B cell (primary cell): ENCODE measurements at regions of chr14 and their contacts with region 1.

Region 1: GRCh38 chr14:23588884-23589598 is 10.5 kb upstream of the JPH4 start:
- DNase-seq: peak; percentile 73
- ATAC-seq: peak; percentile 98
- H3K4me3 ChIP-seq: no peak overlapping the region
- H3K4me3 Mint-ChIP-seq: no peak overlapping the region
- H3K27ac ChIP-seq: no peak overlapping the region
- H3K27ac Mint-ChIP-seq: no peak overlapping the region
- H3K4me1 ChIP-seq: peaks cover 0 to 6% of the 10 kb centered on the region in 2 donors
- H3K4me1 Mint-ChIP-seq: peaks cover 3% of the 10 kb centered on the region
- H3K27me3 ChIP-seq: no peaks in the 10 kb centered on the region
- H3K27me3 Mint-ChIP-seq: peaks cover 27% of the 10 kb centered on the region
- CTCF ChIP-seq: peak; percentile 73

Region 2: DNA sequence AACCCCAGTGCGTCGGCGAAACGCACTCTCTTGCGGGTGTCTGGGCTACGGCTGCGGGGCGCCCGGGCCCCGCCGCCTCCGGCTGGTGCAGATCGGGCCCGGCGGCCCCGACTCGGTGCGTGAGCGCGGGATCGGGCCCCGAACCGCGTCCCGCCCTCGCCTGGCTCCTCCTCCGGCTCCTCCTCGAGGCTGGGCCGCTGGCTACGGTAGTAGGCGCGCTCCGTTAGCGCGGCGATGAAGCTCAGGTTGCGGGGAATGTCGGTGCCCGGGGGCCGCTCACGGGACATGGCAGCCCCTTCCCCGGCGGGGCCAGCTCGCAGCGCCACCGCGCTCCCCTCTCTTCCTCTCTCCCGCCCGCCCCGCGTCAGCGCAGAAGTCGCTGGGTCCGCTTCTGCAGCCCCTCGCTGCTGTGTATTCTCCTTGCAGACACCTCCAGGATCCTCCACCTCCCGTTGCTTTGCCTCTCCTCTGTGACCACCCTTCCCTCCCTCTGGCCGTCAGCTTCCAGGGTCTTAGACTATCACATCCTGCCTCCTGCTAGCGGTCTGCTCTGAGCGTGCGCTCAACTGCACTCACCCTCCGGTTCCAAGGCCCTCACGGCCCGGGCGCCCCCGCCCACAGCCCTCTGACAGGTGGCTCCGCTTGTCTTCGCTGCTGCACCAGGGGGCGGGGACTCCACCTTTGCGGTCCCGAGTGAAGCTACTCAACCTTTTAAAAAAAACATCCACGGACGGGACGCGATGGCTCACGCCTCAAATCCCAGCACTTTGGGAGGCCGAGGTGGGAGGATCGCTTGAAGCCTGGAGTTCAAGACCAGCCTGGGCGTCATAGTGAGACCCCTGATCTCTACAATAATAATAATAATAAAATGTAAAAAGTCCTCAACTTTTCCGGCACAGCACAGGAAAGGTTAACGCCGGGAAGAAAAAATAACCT is 286.5 kb before region 1 on chr14 and contains the start of gene PPP1R3E:
- CTCF ChIA-PET with region 1: no interaction called
- POLR2A ChIA-PET with region 1: no interaction called
- intact Hi-C with region 1: no loop called
- DNase-seq: peak; percentile 91
- ATAC-seq: peak; percentile 25
- H3K4me3 ChIP-seq: peak within 1 kb of the TSS; percentile 54 to 86 (median 81)
- H3K4me3 Mint-ChIP-seq: peak within 1 kb of the TSS; percentile 98
- H3K27ac ChIP-seq: peak within 1 kb of the TSS; percentile 95 to 96
- H3K27ac Mint-ChIP-seq: peak within 1 kb of the TSS; percentile 98
- H3K4me1 ChIP-seq: peaks cover 25 to 37% of the 10 kb centered on the region in 2 donors
- H3K4me1 Mint-ChIP-seq: peaks cover 45% of the 10 kb centered on the region
- H3K27me3 ChIP-seq: no peaks in the 10 kb centered on the region
- H3K27me3 Mint-ChIP-seq: no peaks in the 10 kb centered on the region
- CTCF ChIP-seq: no peak
- total RNA-seq, gene PPP1R3E: 74.8 and 76.7 TPM in 2 replicates

Region 3: DNA sequence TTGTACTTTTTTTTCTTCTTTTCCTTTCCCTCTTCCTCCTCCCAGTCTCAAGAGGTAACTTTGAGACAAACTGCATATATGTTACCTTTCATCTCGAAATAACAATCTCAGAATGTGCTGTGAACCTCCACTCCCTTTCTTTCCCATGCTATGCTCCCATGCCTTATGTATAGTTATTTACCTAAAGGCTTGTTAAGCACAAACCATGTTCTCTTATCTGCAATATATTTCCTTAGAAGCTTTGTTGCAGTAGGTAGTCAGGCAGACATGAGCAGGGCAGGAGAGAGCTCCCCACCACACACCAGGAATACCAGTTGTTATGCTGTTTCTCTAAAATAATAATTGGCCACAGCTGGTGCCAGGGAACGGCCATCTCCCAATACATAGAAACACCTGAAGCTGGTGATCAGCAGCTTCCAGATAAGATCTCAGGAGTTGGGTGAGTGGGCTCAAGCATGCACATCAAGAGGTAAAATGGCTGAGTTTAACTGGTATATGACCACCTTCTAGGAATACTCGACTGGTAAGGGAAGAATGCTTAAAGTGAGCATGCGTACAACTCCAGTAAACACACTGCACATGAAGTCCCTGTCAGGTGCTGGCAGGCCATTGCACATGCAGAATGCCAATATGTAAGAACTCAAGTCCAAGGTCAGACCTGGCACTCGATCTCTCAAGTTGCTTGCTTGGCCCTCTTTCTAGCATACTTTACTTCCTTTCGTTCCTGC is 32.3 kb after region 1 on chr14:
- CTCF ChIA-PET with region 1: no interaction called
- POLR2A ChIA-PET with region 1: no interaction called
- intact Hi-C with region 1: no loop called
- DNase-seq: no peak
- ATAC-seq: no peak
- H3K4me3 ChIP-seq: no peak overlapping the region
- H3K4me3 Mint-ChIP-seq: no peak overlapping the region
- H3K27ac ChIP-seq: no peak overlapping the region
- H3K27ac Mint-ChIP-seq: no peak overlapping the region
- H3K4me1 ChIP-seq: no peaks in the 10 kb centered on the region
- H3K4me1 Mint-ChIP-seq: no peaks in the 10 kb centered on the region
- H3K27me3 ChIP-seq: peaks cover 0 to 3% (median 0%) of the 10 kb centered on the region in 4 experiments
- H3K27me3 Mint-ChIP-seq: peaks cover 30% of the 10 kb centered on the region
- CTCF ChIP-seq: no peak

Region 4: DNA sequence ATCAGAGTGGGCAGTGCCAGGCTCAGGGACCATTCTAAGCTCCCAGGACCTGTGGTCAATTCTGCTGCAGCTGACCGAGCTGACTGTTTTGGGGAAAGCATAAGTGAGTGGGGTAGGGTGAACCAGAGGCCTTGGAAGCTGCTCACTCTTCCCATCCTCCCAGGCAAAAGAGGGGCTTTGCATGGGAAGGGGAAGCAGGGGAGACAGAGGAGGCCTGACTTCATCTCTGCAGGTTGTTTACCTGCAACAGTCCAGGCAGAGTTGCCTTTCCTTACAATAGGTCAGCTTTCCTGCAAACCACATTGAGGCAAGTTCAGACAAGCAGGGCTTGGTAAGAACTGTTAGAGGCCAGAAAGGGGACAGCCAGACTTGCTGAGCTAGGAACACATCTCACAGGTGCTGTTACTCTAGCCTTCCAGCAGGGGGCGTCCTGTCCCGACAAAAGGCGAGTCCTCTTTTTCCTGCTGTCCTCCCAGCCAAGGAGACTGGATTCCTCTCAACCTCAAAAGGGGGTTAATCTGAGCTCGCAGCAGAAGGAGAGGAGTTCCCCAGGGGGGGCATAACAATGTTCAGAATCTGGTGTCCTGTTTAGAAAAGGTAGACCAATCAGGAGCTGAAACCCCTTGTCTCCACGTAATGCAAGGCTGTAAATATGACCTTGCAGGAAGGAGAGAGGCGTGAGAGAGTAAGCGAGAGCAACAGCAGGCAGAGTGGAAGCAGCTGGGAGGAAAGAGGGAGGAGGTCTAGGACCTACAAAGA is 42.8 kb after region 1 on chr14:
- CTCF ChIA-PET with region 1: interaction called, 21 read pairs
- POLR2A ChIA-PET with region 1: no interaction called
- intact Hi-C with region 1: no loop called
- DNase-seq: peak; percentile 71
- ATAC-seq: peak; percentile 58
- H3K4me3 ChIP-seq: peak overlapping the region in 2 of 5 experiments; percentile 11 to 44
- H3K4me3 Mint-ChIP-seq: peak overlapping the region; percentile 4
- H3K27ac ChIP-seq: no peak overlapping the region
- H3K27ac Mint-ChIP-seq: no peak overlapping the region
- H3K4me1 ChIP-seq: peaks cover 3 to 7% of the 10 kb centered on the region in 2 donors
- H3K4me1 Mint-ChIP-seq: peaks cover 4% of the 10 kb centered on the region
- H3K27me3 ChIP-seq: peaks cover 0 to 12% (median 2%) of the 10 kb centered on the region in 4 experiments
- H3K27me3 Mint-ChIP-seq: peaks cover 20% of the 10 kb centered on the region
- CTCF ChIP-seq: peak; percentile 86

Region 5: GRCh38 chr14:23663127-23663526 is 74.1 kb after region 1 on chr14:
- CTCF ChIA-PET with region 1: no interaction called
- POLR2A ChIA-PET with region 1: no interaction called
- intact Hi-C with region 1: loop called (anchors 2 kb)
- DNase-seq: no peak
- ATAC-seq: no peak
- H3K4me3 ChIP-seq: no peak overlapping the region
- H3K4me3 Mint-ChIP-seq: no peak overlapping the region
- H3K27ac ChIP-seq: no peak overlapping the region
- H3K27ac Mint-ChIP-seq: no peak overlapping the region
- H3K4me1 ChIP-seq: no peaks in the 10 kb centered on the region
- H3K4me1 Mint-ChIP-seq: no peaks in the 10 kb centered on the region
- H3K27me3 ChIP-seq: peaks cover 0 to 3% (median 0%) of the 10 kb centered on the region in 4 experiments
- H3K27me3 Mint-ChIP-seq: peaks cover 23% of the 10 kb centered on the region
- CTCF ChIP-seq: no peak

Region 6: GRCh38 chr14:23929822-23930294 is 340.8 kb after region 1 on chr14:
- CTCF ChIA-PET with region 1: interaction called, 24 read pairs
- POLR2A ChIA-PET with region 1: no interaction called
- intact Hi-C with region 1: no loop called
- DNase-seq: peak; percentile 77
- ATAC-seq: peak; percentile 84
- H3K4me3 ChIP-seq: no peak overlapping the region
- H3K4me3 Mint-ChIP-seq: no peak overlapping the region
- H3K27ac ChIP-seq: no peak overlapping the region
- H3K27ac Mint-ChIP-seq: no peak overlapping the region
- H3K4me1 ChIP-seq: no peaks in the 10 kb centered on the region
- H3K4me1 Mint-ChIP-seq: no peaks in the 10 kb centered on the region
- H3K27me3 ChIP-seq: no peaks in the 10 kb centered on the region
- H3K27me3 Mint-ChIP-seq: peaks cover 5% of the 10 kb centered on the region
- CTCF ChIP-seq: peak; percentile 96

Region 7: DNA sequence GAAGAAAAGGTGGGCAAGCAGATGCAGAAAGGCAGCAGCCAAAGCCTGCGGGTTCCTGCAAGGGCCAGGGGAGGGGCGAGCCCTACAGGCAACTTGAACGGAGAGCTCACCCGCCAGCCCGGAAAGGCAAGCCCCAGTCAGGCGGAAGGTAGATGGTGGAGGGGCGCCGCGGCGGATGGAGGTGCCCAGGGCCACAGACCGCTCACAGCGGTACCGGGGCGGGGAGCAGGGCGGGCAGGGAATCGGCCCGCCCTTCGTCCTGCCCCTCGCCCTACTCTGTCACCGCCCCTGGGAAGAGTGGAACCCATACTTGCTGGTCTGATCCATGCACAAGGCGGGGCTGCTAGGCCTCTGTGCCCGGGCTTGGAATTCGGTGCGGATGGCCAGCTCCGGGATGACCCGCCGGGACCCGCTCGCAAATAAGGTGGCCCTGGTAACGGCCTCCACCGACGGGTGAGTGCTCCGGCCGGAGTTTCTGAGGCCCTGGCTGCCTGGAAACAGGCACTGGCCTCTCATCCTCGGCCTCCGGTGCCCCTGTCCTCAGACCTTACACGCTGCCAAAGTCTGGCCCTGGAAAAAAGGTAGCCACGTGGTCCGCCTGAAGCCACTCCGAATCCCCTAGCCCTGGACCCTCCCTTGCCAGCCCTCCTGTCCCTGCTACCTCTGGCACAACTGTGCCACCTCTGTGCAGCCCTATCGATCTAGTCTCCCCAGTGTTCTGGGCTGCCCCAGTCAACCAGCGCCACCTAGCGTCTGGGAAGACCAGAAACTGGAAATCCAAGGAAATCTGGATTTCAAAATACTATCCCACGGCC is 364.6 kb after region 1 on chr14 and contains the start of gene DHRS4:
- CTCF ChIA-PET with region 1: interaction called, 4 read pairs
- POLR2A ChIA-PET with region 1: no interaction called
- intact Hi-C with region 1: loop called (anchors 1 kb)
- DNase-seq: peak; percentile 83
- ATAC-seq: peak; percentile 94
- H3K4me3 ChIP-seq: peak within 1 kb of the TSS; percentile 32 to 97 (median 70)
- H3K4me3 Mint-ChIP-seq: peak within 1 kb of the TSS; percentile 97
- H3K27ac ChIP-seq: peak within 1 kb of the TSS; percentile 40 to 63
- H3K27ac Mint-ChIP-seq: peak within 1 kb of the TSS; percentile 90
- H3K4me1 ChIP-seq: peaks cover 7 to 16% of the 10 kb centered on the region in 2 donors
- H3K4me1 Mint-ChIP-seq: peaks cover 25% of the 10 kb centered on the region
- H3K27me3 ChIP-seq: no peaks in the 10 kb centered on the region
- H3K27me3 Mint-ChIP-seq: no peaks in the 10 kb centered on the region
- CTCF ChIP-seq: peak; percentile 88
- total RNA-seq, gene DHRS4: 15.3 and 15.6 TPM in 2 replicates

Region 8: GRCh38 chr14:24051789-24052655 is 463.0 kb after region 1 on chr14 and contains the start of gene CARMIL3:
- CTCF ChIA-PET with region 1: no interaction called
- POLR2A ChIA-PET with region 1: no interaction called
- intact Hi-C with region 1: loop called (anchors 5 kb)
- DNase-seq: peak; percentile 79
- ATAC-seq: peak; percentile 87
- H3K4me3 ChIP-seq: peak within 1 kb of the TSS; percentile 22 to 81 (median 63)
- H3K4me3 Mint-ChIP-seq: peak within 1 kb of the TSS; percentile 83
- H3K27ac ChIP-seq: peak within 1 kb of the TSS; percentile 34 to 57
- H3K27ac Mint-ChIP-seq: peak within 1 kb of the TSS; percentile 68
- H3K4me1 ChIP-seq: peaks cover 19 to 29% of the 10 kb centered on the region in 2 donors
- H3K4me1 Mint-ChIP-seq: peaks cover 41% of the 10 kb centered on the region
- H3K27me3 ChIP-seq: peaks cover 0 to 31% (median 8%) of the 10 kb centered on the region in 4 experiments
- H3K27me3 Mint-ChIP-seq: peaks cover 7% of the 10 kb centered on the region
- CTCF ChIP-seq: no peak
- total RNA-seq, gene CARMIL3: 1.0 and 1.4 TPM in 2 replicates